ENCODE measurements at regions of chrX and their contacts with region 1.

Region 1: DNA sequence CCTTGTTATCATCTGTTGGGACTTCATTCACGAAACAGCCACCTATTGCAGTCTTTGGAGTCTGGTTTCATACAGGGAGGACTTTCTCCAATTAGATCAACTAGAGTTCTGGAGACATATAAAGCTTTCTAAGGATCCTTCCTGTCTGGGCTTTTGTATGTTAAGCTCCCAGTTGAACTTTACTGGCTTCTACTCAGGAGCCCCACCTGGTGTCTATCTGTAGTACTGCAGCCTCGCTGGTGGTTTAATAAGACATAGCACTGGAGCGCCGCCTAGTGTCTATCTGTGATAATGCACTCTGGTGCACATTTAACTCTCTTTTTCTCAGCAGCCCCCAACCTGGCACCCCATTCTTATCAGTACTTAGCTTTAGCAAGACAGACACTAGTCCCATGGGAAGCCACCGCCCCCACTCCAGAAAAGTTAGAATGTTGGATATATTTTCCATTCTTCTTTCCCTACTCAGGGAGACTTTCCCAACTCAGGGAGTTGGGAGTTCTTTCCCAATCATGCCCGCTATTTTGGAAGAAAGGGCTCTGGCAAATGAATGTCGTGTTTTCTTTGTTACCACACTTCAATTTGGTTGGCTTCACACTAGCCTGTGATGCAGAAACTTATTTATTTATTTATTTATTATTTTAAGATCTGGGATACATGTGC is 36.9 kb upstream of the SYTL4 start:
- DNase-seq: peak; percentile 18 to 91
- H3K4me3 ChIP-seq: no peak overlapping the region
- H3K27ac ChIP-seq: no peak overlapping the region
- H3K4me1 ChIP-seq: no peaks in the 10 kb centered on the region
- H3K27me3 ChIP-seq: no peaks in the 10 kb centered on the region
- CTCF ChIP-seq: peak; percentile 92 to 97 (median 94)

Region 2: DNA sequence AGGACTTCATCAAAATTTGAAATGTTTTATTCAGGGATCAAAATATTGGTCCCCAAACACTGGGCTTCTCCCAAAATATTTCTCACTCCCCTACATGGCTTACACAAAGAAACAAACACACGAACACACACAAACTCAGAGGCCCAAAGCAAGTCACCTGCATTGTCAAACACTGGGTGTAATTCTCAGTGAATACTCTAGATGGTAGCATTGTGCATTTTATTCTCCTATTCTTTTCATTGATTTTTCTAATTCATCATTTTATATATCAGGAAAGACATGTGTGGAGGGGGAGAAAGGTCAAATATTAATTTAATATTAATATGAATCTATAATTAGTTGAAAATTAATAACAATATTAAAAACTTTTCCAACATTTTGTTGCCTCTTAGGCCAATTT is 256.3 kb before region 1 on chrX:
- intact Hi-C with region 1: loop called (anchors 2 kb)
- DNase-seq: no peak
- H3K4me3 ChIP-seq: no peak overlapping the region
- H3K27ac ChIP-seq: no peak overlapping the region
- H3K4me1 ChIP-seq: no peaks in the 10 kb centered on the region
- H3K27me3 ChIP-seq: no peaks in the 10 kb centered on the region
- CTCF ChIP-seq: peak; percentile 28 to 74 (median 64)

Region 3: DNA sequence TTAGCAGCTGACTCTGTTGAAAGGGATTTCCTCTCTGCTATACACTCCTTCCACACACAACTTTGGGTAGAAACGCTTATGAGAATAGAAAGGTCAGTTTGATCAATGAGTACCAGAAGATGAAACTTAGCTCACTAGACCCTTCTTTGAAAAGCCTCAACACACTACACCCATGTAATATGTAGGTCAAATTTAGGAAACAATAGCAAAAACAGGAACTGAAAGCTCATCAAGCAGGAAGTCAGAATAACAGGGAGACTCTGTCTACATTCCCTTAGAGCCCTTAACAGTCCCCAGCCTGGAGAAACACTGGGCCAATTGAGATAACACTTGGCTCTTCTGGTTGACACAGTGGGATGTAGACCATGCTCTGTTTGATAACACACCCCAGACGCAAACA is 94.1 kb before region 1 on chrX:
- intact Hi-C with region 1: loop called (anchors 5 kb)
- DNase-seq: no peak
- H3K4me3 ChIP-seq: no peak overlapping the region
- H3K27ac ChIP-seq: no peak overlapping the region
- H3K4me1 ChIP-seq: no peaks in the 10 kb centered on the region
- H3K27me3 ChIP-seq: no peaks in the 10 kb centered on the region
- CTCF ChIP-seq: no peak

Region 4: DNA sequence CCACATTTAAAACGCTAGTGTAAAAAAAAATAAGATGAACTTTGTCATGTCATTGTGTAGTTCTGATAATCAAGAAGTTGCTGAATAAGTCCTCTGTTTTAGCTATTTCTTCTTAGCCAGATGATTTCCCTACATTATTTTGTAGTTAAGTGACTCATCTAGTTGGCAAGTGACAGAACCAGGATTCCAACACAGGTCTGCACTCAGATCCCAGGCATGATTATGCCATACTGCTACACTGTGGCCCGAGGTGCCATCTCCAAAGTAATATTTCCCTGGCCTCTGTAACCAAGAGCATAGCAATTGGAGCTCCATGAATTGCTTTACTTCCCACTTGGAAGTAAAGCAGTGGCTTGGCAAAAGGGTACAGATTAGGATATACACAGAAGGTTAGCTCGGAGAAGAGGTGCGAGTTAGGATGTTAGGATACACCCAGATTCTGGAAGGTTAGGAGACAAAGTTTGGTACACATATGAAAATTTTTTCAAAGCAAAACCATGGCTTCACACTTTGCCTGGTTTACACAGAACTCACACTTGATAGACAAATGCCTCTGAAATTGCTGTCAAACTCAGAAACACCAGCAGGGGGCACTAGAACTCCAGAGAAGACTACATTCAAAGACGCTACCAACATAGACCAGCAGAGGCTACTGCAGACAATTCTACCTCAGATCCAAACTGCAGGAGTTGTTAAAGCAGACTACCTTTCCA is 83.4 kb before region 1 on chrX:
- intact Hi-C with region 1: loop called (anchors 1 kb)
- DNase-seq: peak in 1 of 2 donors; percentile 85
- H3K4me3 ChIP-seq: no peak overlapping the region
- H3K27ac ChIP-seq: no peak overlapping the region
- H3K4me1 ChIP-seq: no peaks in the 10 kb centered on the region
- H3K27me3 ChIP-seq: no peaks in the 10 kb centered on the region
- CTCF ChIP-seq: peak; percentile 69 to 81 (median 80)

Region 5: DNA sequence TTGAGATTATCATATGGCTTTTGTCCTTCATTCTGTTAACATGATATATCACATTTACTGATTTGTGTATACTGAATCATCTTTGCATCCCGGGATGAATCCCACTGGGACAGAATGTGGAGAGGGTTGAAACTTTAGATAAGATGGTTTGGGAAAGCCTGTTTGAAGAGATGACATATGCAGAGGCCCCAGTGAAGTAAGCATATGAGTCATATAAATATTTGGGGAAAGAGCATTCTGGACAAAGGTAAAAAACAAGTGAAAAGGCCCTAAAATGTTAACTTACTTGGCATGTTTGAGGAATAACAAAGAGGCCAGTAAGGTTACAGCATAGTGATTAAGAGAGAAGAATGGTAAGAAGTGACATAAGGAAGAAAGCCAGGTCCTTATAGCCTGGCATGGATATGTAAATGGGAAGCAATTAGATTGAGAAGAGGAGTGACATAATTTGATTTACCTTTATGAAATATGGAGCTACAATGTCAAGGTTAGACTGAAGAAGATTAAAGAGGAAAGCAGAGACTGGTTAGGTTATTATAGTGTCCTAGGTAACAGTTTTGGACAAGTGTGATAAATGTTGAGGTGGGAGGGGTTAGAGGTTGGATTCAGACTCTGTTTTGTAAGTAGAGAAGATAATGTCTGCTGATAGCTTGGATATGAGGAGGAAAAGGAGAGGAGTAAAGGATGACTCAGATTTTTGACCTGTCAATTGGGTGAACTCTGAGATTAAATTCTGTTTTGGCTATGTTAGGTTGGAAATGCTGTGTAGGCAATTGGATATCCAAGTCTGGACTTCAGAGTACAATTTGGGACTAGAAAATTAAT is 396.2 kb after region 1 on chrX:
- intact Hi-C with region 1: no loop called
- DNase-seq: no peak
- H3K4me3 ChIP-seq: no peak overlapping the region
- H3K27ac ChIP-seq: no peak overlapping the region
- H3K4me1 ChIP-seq: no peaks in the 10 kb centered on the region
- H3K27me3 ChIP-seq: no peaks in the 10 kb centered on the region
- CTCF ChIP-seq: no peak

Measured in ascending aorta (tissue), 2 donors.